Motor neuron (in vitro differentiated cells): ENCODE measurements at regions of chr2 and their contacts with region 1.

Region 1: GRCh38 chr2:149799013-149799705 is 211.6 kb upstream of the MMADHC start:
- ATAC-seq: peak; percentile 81 to 95 (median 92)
- H3K4me3 ChIP-seq: no peak overlapping the region
- H3K27ac ChIP-seq: no peak overlapping the region
- H3K4me1 ChIP-seq: peaks cover 12 to 32% of the 10 kb centered on the region in 2 donors

Region 2: DNA sequence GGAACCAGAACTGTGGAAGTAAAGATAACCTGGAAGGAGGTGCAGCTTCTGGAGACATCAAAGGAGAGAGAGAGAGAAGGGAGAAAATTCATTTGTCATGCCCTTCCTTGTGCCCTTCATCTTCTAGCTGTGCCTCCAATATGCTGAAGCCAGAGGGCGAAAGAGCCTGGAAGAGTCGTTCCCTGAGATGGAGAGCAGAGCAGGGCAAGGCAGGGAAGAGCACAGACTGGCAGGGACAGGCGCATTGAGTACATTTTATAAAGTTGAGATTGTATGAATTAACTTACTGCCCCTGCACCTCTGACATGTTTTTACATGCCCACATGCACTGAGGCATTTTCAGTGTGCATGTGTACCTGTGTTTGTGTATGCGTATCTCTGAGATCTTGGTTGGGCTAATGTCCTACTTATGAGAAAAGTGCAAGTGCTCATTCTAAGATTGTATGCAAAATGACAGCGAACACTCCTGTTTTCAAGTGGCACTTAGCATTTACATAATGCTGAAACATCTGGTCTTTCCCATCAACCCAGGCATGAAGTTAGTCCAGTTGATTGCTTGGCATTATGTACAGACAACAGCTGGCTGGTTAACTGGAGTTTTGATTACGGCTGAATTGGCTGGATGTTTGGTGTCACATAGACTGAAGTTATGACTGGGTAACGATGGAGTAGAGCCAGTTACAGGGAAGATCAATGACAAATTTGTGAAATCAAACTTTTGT is 187.9 kb before region 1 on chr2:
- in situ Hi-C with region 1: loop called in 1 of 9 experiments (anchors 25 kb)
- ATAC-seq: peak in 7 of 8 experiments; percentile 40 to 77 (median 64)
- H3K4me3 ChIP-seq: no peak overlapping the region
- H3K27ac ChIP-seq: no peak overlapping the region
- H3K4me1 ChIP-seq: no peaks in the 10 kb centered on the region

Region 3: DNA sequence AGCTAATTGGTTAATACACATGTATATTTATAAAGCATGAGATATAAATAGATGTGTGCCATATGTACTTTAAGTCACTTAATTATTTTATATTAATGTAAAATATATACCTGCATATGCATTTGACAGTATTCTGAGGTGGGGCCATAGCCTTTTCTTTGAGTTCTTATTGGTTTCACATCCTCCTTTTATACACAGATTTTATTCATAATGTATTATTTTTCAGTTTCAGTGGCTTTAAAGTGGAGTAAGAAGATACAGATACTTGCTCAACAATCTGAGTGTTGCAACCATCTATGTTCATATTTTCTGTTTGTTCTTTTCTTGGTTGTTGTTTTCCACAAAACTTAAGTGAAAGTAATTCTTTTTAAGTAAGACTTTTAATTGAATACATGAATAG is 251.8 kb after region 1 on chr2:
- in situ Hi-C with region 1: no loop called
- ATAC-seq: no peak
- H3K4me3 ChIP-seq: no peak overlapping the region
- H3K27ac ChIP-seq: no peak overlapping the region
- H3K4me1 ChIP-seq: peaks cover 20 to 28% of the 10 kb centered on the region in 2 donors

Region 4: GRCh38 chr2:150472511-150472899 is 673.3 kb after region 1 on chr2:
- in situ Hi-C with region 1: loop called in 3 of 9 experiments (anchors 25 kb)
- ATAC-seq: peak in 4 of 8 experiments; percentile 12 to 82 (median 53)
- H3K4me3 ChIP-seq: no peak overlapping the region
- H3K27ac ChIP-seq: no peak overlapping the region
- H3K4me1 ChIP-seq: peaks cover 11 to 43% of the 10 kb centered on the region in 2 donors